IMR-90 (cell line): ENCODE measurements at regions of chr20 and their contacts with region 1.

Region 1: GRCh38 chr20:31605031-31605901 is at the start of gene ID1:
- DNase-seq: peak; percentile 93
- ATAC-seq: peak; percentile 84
- H3K4me3 ChIP-seq: peak within 1 kb of the TSS; percentile 66
- H3K27ac ChIP-seq: peak within 1 kb of the TSS; percentile 87
- H3K4me1 ChIP-seq: peaks cover 21% of the 10 kb centered on the region
- H3K27me3 ChIP-seq: no peaks in the 10 kb centered on the region
- CTCF ChIP-seq: no peak
- POLR2A ChIP-seq: peak; percentile 99
- RAD21 ChIP-seq: no peak
- total RNA-seq, gene ID1: 174 and 186 TPM in 2 replicates

Region 2: DNA sequence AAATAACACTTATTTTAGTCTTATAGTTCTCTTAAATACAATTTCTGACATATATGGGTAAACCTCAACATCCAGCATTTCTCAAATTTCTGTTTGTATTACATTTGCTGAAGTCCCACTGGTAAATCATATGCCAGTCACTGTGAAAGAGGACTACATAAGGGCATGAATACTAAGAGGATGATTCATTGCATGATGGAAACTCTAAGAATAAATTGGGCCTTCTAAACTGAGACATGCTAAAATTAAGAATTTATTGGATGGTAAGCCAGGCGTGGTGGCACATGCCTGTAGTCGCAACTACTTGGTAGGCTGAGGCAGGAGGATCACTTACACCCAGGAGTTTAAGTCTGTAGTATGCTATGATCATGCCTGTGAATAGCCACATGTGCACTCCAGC is 152.7 kb before region 1 on chr20:
- CTCF ChIA-PET with region 1: no interaction called
- POLR2A ChIA-PET with region 1: no interaction called
- dilution Hi-C with region 1: no loop called
- in situ Hi-C with region 1: no loop called
- intact Hi-C with region 1: no loop called
- DNase-seq: no peak
- ATAC-seq: no peak
- H3K4me3 ChIP-seq: no peak overlapping the region
- H3K27ac ChIP-seq: no peak overlapping the region
- H3K4me1 ChIP-seq: no peaks in the 10 kb centered on the region
- H3K27me3 ChIP-seq: no peaks in the 10 kb centered on the region
- CTCF ChIP-seq: no peak
- POLR2A ChIP-seq: no peak
- RAD21 ChIP-seq: no peak

Region 3: GRCh38 chr20:31560094-31560899 is 45.0 kb before region 1 on chr20:
- CTCF ChIA-PET with region 1: interaction called, 97 read pairs
- POLR2A ChIA-PET with region 1: no interaction called
- dilution Hi-C with region 1: no loop called
- in situ Hi-C with region 1: loop called (anchors 5 kb)
- intact Hi-C with region 1: no loop called
- DNase-seq: peak; percentile 86
- ATAC-seq: peak; percentile 48
- H3K4me3 ChIP-seq: no peak overlapping the region
- H3K27ac ChIP-seq: peak overlapping the region; percentile 76
- H3K4me1 ChIP-seq: peaks cover 18% of the 10 kb centered on the region
- H3K27me3 ChIP-seq: no peaks in the 10 kb centered on the region
- CTCF ChIP-seq: peak; percentile 91
- POLR2A ChIP-seq: no peak; the same call in 1 of the 2 replicates
- RAD21 ChIP-seq: peak; percentile 60

Region 4: GRCh38 chr20:31572701-31573554 is 32.3 kb before region 1 on chr20:
- CTCF ChIA-PET with region 1: interaction called, 71 read pairs
- POLR2A ChIA-PET with region 1: interaction called, 40 read pairs
- dilution Hi-C with region 1: no loop called
- in situ Hi-C with region 1: no loop called
- intact Hi-C with region 1: loop called (anchors 1 kb)
- DNase-seq: peak; percentile 98
- ATAC-seq: peak; percentile 83
- H3K4me3 ChIP-seq: peak overlapping the region; percentile 35
- H3K27ac ChIP-seq: peak overlapping the region; percentile 92
- H3K4me1 ChIP-seq: peaks cover 27% of the 10 kb centered on the region
- H3K27me3 ChIP-seq: no peaks in the 10 kb centered on the region
- CTCF ChIP-seq: no peak
- POLR2A ChIP-seq: peak; percentile 72
- RAD21 ChIP-seq: no peak

Region 5: DNA sequence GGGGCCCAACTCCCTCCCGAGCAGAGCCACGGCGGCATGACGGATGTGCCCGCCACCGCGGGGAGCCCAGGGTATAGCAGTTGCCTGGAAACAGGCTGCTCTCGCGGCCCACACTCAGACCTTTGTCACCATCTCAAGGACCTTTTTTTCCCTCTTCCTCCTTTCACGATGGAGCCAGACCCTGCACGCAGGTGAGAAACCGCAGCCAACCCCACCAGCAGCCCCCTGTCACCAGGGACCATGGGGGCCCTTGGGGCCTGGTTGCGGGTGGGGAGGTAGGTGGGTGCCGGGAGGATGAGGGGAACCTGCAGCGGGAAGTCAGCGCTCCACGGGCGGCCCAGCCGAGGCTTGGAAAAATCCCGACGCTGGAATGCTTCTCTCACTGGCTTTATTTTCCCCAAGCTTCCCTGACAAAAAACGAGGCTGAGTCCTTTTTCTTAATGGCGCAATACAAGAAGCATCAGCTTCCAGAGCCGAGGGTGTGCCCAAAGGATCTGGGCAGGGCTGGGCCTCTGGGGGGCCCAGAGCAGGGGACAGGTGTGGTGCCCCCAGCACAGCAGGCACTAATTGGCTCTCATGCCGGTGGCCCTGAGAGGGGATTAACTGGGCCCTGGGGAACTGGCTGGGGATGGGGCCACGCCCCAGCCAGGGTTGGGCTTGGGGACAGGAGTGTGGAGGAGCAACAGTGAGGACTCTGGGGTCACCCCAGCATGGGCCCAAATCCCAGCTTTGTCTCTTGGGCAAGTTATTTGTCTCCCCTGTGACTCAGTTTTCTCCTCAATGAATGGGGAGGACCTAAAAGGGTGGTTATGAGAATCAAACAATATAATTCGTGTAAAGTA is 955.9 kb after region 1 on chr20:
- CTCF ChIA-PET with region 1: no interaction called
- POLR2A ChIA-PET with region 1: no interaction called
- dilution Hi-C with region 1: no loop called
- in situ Hi-C with region 1: no loop called
- intact Hi-C with region 1: no loop called
- DNase-seq: no peak
- ATAC-seq: peak; percentile 38
- H3K4me3 ChIP-seq: no peak overlapping the region
- H3K27ac ChIP-seq: no peak overlapping the region
- H3K4me1 ChIP-seq: no peaks in the 10 kb centered on the region
- H3K27me3 ChIP-seq: peaks cover 3% of the 10 kb centered on the region; the same call in 1 of the 2 replicates
- CTCF ChIP-seq: no peak
- POLR2A ChIP-seq: no peak
- RAD21 ChIP-seq: no peak

Region 6: GRCh38 chr20:33007376-33008335 is 1402.4 kb after region 1 on chr20 and contains the start of gene BPIFB2:
- CTCF ChIA-PET with region 1: no interaction called
- POLR2A ChIA-PET with region 1: interaction called, 22 read pairs
- dilution Hi-C with region 1: no loop called
- in situ Hi-C with region 1: no loop called
- intact Hi-C with region 1: no loop called
- DNase-seq: no peak
- ATAC-seq: no peak
- H3K4me3 ChIP-seq: no peak within 1 kb of the TSS
- H3K27ac ChIP-seq: no peak within 1 kb of the TSS
- H3K4me1 ChIP-seq: no peaks in the 10 kb centered on the region
- H3K27me3 ChIP-seq: peaks cover 3% of the 10 kb centered on the region
- CTCF ChIP-seq: no peak
- POLR2A ChIP-seq: no peak
- RAD21 ChIP-seq: no peak
- total RNA-seq, gene BPIFB2: not detected in 2 replicates